ENCODE measurements at regions of chr12 and their contacts with region 1.

Region 1: GRCh38 chr12:5656836-5657235 is 224.9 kb downstream of the NTF3 start:
- DNase-seq: no peak

Region 2: GRCh38 chr12:5643266-5643665 is 13.6 kb before region 1 on chr12:
- intact Hi-C with region 1: loop called in 1 of 2 experiments (anchors 1 kb)
- DNase-seq: no peak

Region 3: DNA sequence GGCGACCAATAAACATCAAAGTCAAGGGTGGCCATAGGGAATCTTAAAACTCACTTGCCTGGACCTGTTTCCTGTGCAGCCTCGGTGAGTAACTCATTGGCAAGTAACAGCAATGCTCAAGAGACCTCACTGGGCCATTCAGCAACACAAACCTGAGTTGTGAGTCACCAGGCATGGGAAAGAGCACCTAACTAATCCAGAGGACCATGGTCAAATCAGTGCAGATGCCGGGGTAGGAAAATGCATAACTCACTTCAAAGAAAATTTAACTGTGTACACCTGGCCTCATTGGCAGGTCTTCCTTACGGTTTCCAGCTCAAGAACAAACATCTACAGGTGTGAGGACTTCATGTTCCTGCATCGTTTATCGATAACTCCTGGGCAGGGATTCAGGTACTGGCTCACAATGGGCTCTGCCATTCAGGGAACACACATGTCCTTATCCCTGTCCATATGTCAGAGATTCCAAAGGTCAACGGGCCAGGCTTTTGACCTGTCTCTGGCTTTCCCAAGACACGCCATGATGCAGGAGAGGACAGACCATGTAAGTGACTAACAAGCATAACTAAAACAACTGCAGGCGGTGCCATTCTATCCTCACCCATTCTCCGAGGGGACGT is 76.4 kb after region 1 on chr12:
- intact Hi-C with region 1: no loop called
- DNase-seq: no peak

Measured in posterior vena cava (tissue), 2 donors.